ENCODE measurements at regions of chr6 and their contacts with region 1.

Region 1: DNA sequence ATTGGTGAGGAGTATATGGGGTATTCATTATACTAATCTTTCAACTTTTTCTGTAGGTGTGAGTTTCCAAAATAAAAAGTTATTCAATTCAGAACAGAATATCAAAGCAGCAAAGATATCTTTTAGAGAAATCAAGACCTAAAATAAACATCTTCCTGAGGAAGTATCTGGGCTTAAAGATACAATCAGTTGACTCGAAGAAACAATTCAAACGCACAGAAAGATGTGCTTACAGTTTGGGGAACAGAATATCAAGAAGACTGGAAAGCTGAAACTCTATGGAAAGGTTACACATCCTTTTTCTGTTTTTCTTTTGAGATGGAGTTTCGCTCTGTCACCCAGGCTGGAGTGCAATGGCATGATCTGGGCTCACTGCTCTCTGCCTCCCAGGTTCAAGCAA is 36.2 kb upstream of the SAYSD1 start:
- DNase-seq: no peak
- H3K4me3 ChIP-seq: no peak overlapping the region
- H3K27ac ChIP-seq: no peak overlapping the region
- H3K4me1 ChIP-seq: no peaks in the 10 kb centered on the region
- H3K27me3 ChIP-seq: peaks cover 61% of the 10 kb centered on the region
- CTCF ChIP-seq: no peak

Region 2: GRCh38 chr6:39530201-39530759 is 379.1 kb after region 1 on chr6:
- CTCF ChIA-PET with region 1: no interaction called
- POLR2A ChIA-PET with region 1: no interaction called
- intact Hi-C with region 1: no loop called
- DNase-seq: no peak
- H3K4me3 ChIP-seq: no peak overlapping the region
- H3K27ac ChIP-seq: no peak overlapping the region
- H3K4me1 ChIP-seq: no peaks in the 10 kb centered on the region
- H3K27me3 ChIP-seq: peaks cover 41% of the 10 kb centered on the region
- CTCF ChIP-seq: no peak

Region 3: GRCh38 chr6:39918107-39918385 is 766.8 kb after region 1 on chr6:
- CTCF ChIA-PET with region 1: no interaction called
- POLR2A ChIA-PET with region 1: interaction called, 12 read pairs
- intact Hi-C with region 1: no loop called
- DNase-seq: no peak
- H3K4me3 ChIP-seq: no peak overlapping the region
- H3K27ac ChIP-seq: no peak overlapping the region
- H3K4me1 ChIP-seq: no peaks in the 10 kb centered on the region
- H3K27me3 ChIP-seq: peaks cover 46% of the 10 kb centered on the region
- CTCF ChIP-seq: no peak